T-cell (primary cell): ENCODE measurements at regions of chr1 and their contacts with region 1.

Region 1: GRCh38 chr1:111467865-111468711 is 5.7 kb upstream of the C1orf162 start:
- DNase-seq: no peak
- ATAC-seq: no peak
- H3K4me3 ChIP-seq: no peak overlapping the region
- H3K4me3 Mint-ChIP-seq: no peak overlapping the region
- H3K27ac ChIP-seq: no peak overlapping the region
- H3K27ac Mint-ChIP-seq: peak overlapping the region; percentile 50 to 59
- H3K4me1 ChIP-seq: peaks cover 33 to 43% of the 10 kb centered on the region in 2 experiments
- H3K4me1 Mint-ChIP-seq: peaks cover 12 to 24% (median 17%) of the 10 kb centered on the region in 3 donors
- H3K27me3 ChIP-seq: no peaks in the 10 kb centered on the region
- H3K27me3 Mint-ChIP-seq: no peaks in the 10 kb centered on the region

Region 2: DNA sequence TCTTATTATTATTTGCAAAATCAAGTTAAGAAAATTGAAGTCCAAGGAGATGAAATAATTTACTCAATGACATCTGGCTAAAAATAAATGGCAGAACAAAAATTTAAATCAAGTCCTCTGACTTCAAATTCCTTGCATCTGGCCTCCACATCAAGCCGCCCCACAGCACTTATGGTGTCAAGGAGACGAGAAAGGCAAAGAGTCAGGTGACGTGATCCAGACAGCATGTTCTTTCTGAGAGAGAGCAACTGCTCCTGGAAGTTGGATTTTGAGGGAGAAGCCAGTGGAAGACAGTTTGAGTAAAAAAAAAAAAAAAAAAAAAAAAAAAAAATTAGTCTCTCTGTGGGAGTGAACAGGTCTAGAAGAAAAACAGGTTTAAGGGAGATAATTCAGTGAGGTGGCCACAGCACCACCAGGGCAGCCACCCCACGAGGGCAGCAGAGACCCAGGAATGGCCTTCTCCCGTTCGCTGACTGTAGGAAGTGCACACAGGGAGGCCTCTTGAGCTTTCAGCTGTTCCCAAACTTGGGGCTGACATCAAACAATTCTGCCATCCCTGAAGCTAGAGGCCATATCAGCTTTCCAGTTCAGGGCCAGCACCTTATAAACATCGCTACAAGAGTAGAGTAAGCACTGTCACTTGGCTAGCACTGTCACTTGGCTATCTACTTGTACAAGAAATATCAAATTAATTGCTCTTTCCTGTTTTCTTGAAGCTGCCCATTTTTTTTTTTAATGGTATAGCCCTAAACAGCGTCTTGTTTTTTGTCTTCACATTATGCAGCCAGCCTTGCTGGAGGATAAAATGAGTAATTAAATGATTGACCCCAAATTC is 13.5 kb after region 1 on chr1:
- CTCF ChIA-PET with region 1: no interaction called
- POLR2A ChIA-PET with region 1: interaction called in 1 of 2 experiments, 12 read pairs
- DNase-seq: peak in 33 of 35 experiments; percentile 11 to 70 (median 36)
- ATAC-seq: peak; percentile 45 to 70 (median 64)
- H3K4me3 ChIP-seq: no peak overlapping the region
- H3K4me3 Mint-ChIP-seq: no peak overlapping the region
- H3K27ac ChIP-seq: no peak overlapping the region
- H3K27ac Mint-ChIP-seq: peak overlapping the region in 1 of 2 donors; percentile 44
- H3K4me1 ChIP-seq: peaks cover 10 to 20% of the 10 kb centered on the region in 2 experiments
- H3K4me1 Mint-ChIP-seq: peaks cover 37 to 54% (median 42%) of the 10 kb centered on the region in 3 donors
- H3K27me3 ChIP-seq: no peaks in the 10 kb centered on the region
- H3K27me3 Mint-ChIP-seq: no peaks in the 10 kb centered on the region

Region 3: DNA sequence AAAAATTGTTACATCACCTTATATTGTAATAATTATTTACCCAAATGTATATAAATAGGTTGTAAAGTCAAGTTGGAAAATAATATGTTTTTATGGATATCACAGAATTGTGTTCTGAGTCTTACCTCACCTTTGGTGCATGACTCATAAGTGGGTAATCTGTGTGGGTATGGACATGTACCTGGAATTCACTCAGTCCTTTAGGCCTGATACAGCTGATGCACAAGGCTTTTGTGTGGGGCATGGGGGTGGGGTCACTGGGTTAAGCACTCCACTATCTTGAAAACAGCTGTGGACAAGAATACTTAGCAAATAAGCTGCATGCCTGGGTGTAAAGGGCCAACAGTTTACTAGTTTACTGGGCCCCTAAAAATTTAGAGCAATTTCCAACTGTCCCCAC is 236.7 kb after region 1 on chr1:
- CTCF ChIA-PET with region 1: no interaction called
- POLR2A ChIA-PET with region 1: no interaction called
- DNase-seq: no peak
- ATAC-seq: no peak
- H3K4me3 ChIP-seq: no peak overlapping the region
- H3K4me3 Mint-ChIP-seq: no peak overlapping the region
- H3K27ac ChIP-seq: no peak overlapping the region
- H3K27ac Mint-ChIP-seq: peak overlapping the region in 1 of 2 donors; percentile 65
- H3K4me1 ChIP-seq: no peaks in the 10 kb centered on the region
- H3K4me1 Mint-ChIP-seq: peaks cover 13 to 19% (median 15%) of the 10 kb centered on the region in 3 donors
- H3K27me3 ChIP-seq: no peaks in the 10 kb centered on the region
- H3K27me3 Mint-ChIP-seq: no peaks in the 10 kb centered on the region